AG04450 (cell line): ENCODE measurements at regions of chr20 and their contacts with region 1.

Region 1: GRCh38 chr20:9407805-9408421 is 106.5 kb upstream of the LAMP5 start:
- DNase-seq: peak; percentile 60
- H3K4me3 ChIP-seq: no peak overlapping the region
- H3K27ac ChIP-seq: no peak overlapping the region
- H3K27me3 ChIP-seq: no peaks in the 10 kb centered on the region
- CTCF ChIP-seq: peak; percentile 85

Region 2: DNA sequence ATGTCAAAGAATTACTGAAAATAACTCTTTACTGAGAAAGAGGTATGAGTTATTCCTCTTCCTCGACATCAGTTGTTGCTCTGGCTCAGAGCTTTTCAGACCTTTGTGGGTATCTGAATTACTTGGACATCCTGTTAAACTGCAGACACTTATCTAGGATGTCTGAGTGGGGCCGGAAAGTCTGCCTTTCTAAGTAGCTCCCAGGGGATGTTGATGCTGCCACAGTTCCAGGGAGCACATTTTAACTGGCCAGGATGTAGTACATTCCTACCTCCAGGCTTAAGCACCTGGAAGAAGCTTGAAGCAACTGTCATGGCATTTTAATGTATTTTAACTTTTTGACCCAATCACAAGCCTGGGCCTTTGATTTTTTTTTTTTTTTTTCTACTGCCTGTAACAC is 604.8 kb before region 1 on chr20:
- CTCF ChIA-PET with region 1: interaction called, 10 read pairs
- POLR2A ChIA-PET with region 1: no interaction called
- DNase-seq: no peak
- H3K4me3 ChIP-seq: no peak overlapping the region
- H3K27ac ChIP-seq: no peak overlapping the region
- H3K27me3 ChIP-seq: no peaks in the 10 kb centered on the region
- CTCF ChIP-seq: no peak

Region 3: GRCh38 chr20:9332783-9333479 is 75.0 kb before region 1 on chr20:
- CTCF ChIA-PET with region 1: no interaction called
- POLR2A ChIA-PET with region 1: no interaction called
- DNase-seq: no peak
- H3K4me3 ChIP-seq: no peak overlapping the region
- H3K27ac ChIP-seq: no peak overlapping the region
- H3K27me3 ChIP-seq: no peaks in the 10 kb centered on the region
- CTCF ChIP-seq: no peak

Region 4: GRCh38 chr20:9424551-9424950 is 16.6 kb after region 1 on chr20:
- CTCF ChIA-PET with region 1: interaction called, 105 read pairs
- POLR2A ChIA-PET with region 1: no interaction called
- DNase-seq: no peak
- H3K4me3 ChIP-seq: no peak overlapping the region
- H3K27ac ChIP-seq: no peak overlapping the region
- H3K27me3 ChIP-seq: no peaks in the 10 kb centered on the region
- CTCF ChIP-seq: no peak

Region 5: DNA sequence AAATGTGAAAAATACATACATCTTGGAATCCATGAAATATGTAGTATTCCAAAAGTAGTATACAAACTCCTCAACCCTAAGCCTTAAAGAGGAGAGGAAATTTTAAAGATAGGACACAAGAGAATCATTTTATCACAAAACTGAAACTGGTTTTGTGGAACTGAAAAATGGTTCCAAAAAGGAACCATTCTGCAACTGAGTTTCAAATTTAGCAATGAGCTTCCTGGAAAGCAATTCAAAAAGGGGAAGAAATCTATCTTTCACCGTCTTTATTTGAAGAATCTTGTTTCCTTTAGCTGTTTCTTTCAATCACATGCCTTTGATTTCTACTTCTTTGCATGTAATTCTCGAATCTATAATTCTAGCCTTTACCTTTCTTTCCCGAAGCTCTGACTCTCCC is 74.3 kb after region 1 on chr20:
- CTCF ChIA-PET with region 1: interaction called, 10 read pairs
- POLR2A ChIA-PET with region 1: no interaction called
- DNase-seq: no peak
- H3K4me3 ChIP-seq: no peak overlapping the region
- H3K27ac ChIP-seq: no peak overlapping the region
- H3K27me3 ChIP-seq: no peaks in the 10 kb centered on the region
- CTCF ChIP-seq: no peak

Region 6: DNA sequence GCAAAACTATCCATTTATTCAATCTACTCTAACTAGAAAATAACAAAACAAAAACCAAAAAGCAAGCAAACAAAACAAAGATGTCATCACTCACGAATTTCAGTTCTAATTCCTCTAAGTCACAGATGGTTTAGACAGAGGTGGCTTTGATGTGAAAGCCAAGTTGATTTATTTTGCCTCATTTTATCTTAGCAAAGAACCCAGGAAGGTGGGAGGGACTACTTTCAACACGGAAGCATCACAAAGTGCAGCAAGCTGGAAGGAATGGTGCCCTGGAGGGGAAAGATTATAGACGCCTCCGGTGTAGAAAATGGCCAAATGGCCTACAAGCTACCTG is 194.9 kb after region 1 on chr20:
- CTCF ChIA-PET with region 1: interaction called, 606 read pairs
- POLR2A ChIA-PET with region 1: no interaction called
- DNase-seq: no peak
- H3K4me3 ChIP-seq: no peak overlapping the region
- H3K27ac ChIP-seq: no peak overlapping the region
- H3K27me3 ChIP-seq: peaks cover 10% of the 10 kb centered on the region
- CTCF ChIP-seq: no peak

Region 7: GRCh38 chr20:9912858-9913434 is 505.0 kb after region 1 on chr20:
- CTCF ChIA-PET with region 1: interaction called, 58 read pairs
- POLR2A ChIA-PET with region 1: no interaction called
- DNase-seq: peak; percentile 3
- H3K4me3 ChIP-seq: no peak overlapping the region
- H3K27ac ChIP-seq: no peak overlapping the region
- H3K27me3 ChIP-seq: no peaks in the 10 kb centered on the region
- CTCF ChIP-seq: peak; percentile 86